Head of caudate nucleus (tissue), 42 donors: ENCODE measurements at regions of chr2 and their contacts with region 1.

Region 1: DNA sequence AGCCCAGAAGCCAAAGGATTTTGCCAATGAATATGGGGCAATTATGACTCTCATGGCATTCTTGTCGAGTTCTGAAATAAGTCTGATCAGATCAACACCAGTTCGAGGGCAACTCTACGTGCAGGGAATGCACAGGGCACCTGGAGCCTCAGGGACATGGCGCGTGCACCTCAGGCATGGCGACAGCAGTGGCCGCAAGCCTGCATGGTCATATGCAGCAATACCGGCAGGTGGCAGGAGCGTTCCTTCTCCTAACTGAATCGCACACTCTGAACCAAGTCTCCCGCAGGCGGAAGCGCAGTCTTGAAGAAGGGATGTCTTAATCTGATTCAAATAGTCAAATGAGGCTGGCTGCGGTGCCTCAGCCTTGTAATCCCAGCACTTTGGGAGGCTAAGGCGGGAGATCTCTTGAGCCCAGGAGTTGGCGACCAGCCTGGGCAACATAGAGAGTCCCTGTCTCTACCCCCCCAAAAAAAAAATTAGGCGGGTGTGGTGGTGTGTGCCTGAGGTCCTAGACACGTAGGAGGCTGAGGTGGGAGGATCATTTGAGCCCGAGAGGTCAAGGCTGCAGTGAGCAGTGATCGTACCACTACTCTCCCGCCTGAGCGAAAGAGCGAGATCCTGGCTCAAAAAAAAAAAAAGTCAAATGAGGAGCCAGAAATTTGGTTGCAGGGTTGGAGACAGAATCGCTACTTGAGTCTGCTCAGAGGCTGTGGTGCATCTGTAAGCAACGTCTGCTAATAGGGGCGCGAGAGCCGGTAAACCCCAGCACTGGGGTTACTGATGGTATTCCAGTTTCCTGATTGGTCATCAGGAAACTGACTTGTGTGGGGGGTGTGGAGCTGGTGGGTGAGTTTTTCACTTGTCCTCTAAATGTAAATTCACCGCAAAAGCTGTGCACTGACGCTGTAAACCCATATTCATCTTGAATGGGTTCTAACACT is 28.8 kb downstream of the FHL2 start:
- DNase-seq: peak; percentile 77 to 95 (median 86)

Region 2: DNA sequence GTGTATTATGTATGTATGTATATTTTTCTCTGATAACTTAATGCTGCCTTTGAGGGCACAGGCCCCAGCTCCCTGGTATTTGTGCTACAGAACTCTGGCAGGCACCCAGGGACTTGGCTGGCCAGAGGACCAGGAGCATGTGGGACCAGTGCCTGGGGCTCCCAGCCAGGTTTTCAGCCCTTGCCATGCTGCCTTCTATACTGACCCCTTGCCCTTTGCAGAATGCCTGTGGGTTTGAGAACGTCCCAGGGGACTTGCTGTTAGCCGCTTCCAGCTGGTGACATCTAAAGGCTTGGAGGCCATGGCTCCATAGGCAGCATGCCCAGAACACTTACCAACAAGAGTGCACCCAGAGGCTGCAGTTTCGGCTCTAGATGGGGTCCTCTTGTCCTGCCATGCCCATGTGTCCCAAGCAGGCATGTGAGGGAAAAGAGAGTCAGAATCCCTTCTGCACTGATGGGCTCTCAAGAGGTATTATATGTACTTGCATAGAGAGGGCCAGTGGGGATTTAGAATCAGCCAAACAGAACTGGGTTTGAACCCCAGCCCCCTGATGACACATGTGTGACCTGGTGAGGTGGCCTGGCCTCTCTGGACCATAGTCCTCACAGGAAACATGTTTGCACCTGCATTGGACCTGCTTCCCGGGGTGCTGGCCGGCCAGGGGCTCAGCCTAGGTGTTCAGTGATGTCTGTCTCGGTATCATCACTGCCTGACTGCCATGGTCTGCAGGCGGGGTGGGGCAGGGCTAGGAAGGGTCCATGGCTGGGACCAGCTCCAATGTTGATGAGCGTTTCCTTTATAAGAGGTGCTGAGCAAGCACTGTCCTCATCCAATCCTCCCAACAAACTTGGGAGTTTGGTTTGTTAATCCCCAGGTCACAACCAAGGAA is 148.0 kb after region 1 on chr2:
- intact Hi-C with region 1: loop called (anchors 5 kb)
- DNase-seq: peak in 29 of 42 donors; percentile 6 to 63 (median 29)